ENCODE measurements at regions of chr2 and their contacts with region 1.

Region 1: GRCh38 chr2:27271631-27272340 is 3.4 kb upstream of the DNAJC5G start:
- DNase-seq: no peak
- CTCF ChIP-seq: no peak

Region 2: DNA sequence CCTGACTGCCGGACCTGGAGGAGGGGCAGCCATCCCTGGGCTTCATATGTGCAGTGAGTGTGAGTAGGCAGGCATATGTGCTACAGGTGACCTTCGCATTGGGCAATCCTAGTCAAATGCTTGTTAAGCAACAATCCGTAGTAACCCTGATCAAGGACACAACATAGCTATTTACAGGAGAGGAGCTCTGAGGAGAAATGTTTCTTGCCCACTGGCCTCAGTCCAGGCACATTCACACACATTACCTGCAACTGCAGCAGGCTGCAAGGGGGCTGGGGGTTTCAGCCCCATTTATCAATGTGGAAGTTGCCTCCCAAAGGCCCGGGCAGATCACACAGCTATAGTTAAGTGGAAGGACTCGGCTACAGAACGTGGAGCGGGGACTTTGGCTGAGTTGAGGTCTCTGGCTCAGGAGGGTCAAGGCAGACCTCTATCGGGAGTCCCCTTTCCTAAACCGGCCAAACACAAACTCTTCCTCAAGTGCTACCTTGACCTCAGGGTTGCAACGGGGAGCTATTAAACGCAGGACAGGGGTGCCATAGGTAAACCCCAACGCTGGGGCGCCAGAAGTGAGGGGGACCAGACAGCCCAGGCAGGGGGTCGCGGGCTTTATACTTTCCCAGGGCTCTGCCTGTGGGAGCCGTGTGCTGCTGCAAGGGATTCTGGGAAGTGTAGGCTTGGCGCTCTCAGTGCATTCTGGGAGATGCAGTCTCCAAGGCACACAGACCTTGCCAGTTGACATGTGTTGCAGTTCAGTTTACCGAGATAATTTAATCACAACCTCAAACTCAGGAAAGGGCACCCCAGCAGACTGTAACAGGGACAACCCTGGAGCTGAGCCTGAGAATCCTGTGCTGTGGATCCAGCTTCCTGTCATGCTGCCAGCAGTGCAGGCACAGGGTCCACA is 175.8 kb before region 1 on chr2:
- CTCF ChIA-PET with region 1: interaction called, 13 read pairs
- POLR2A ChIA-PET with region 1: no interaction called
- DNase-seq: peak; percentile 85
- CTCF ChIP-seq: no peak

Measured in GM10248 (cell line).